Left ventricle myocardium superior (tissue), 1 donor: ENCODE measurements at regions of chr14 and their contacts with region 1.

Region 1: GRCh38 chr14:61837336-61838229 is 75.4 kb downstream of the SNAPC1 start:
- DNase-seq: peak; percentile 73
- ATAC-seq: peak; percentile 95

Region 2: GRCh38 chr14:61296719-61297502 is 540.7 kb before region 1 on chr14:
- intact Hi-C with region 1: loop called (anchors 5 kb)
- DNase-seq: no peak
- ATAC-seq: peak; percentile 32